Activated T-helper 2 cell treated with anti-CD3 and anti-CD28 coated beads, Interferon-gamma antibody, Interleukin-2, Interleukin-4, amounts not matched to agents 10 μg/mL and 5 μg/mL and 100 μg/mL, durations not matched to agents 14 hours and 24 hours and 36 hours (primary cell): ENCODE measurements at regions of chr2 and their contacts with region 1.

Region 1: DNA sequence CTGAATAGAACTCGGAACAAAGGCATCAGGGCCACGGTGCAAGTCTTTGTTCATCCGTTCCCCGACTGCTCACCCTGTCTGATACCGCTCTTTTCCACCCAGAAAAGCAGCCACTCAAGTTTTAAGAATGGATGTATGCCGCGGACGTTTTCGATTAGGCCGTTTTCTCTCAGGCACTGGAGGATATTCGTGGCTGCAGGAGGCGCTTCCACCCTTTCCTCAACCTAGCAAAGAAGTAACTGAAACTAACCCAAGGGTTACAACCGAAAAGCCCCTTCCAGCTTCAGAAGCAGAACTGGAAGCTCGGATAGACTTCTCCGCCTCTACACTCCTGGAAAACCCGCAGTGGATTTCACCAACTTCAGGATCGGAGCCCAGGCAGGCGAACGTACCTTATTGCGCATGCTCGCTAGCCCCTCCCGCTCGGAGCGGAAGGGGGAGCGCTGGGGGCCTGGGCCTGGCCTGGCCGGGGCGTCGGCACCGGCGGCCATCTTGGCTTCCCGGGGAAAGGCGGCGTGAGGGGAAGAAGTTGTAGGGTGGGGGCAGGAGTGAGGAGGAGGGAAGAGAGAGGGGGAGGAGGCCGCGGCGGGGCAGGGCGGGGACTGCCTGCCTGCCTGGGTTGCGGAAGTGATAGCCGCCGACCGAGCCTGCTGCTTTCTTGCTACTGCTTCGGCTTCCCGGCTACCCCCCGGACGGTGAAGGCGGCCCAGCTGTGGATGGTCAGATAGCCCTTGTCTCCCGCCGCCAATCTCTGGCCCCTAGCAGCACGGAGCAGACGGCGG is at the start of gene ACTR3:
- DNase-seq: peak; percentile 98
- H3K4me3 Mint-ChIP-seq: peak within 1 kb of the TSS; percentile 98
- H3K27ac Mint-ChIP-seq: peak within 1 kb of the TSS; percentile 99
- H3K4me1 Mint-ChIP-seq: peaks cover 67% of the 10 kb centered on the region
- H3K27me3 Mint-ChIP-seq: no peaks in the 10 kb centered on the region
- total RNA-seq, gene ACTR3: 521 and 530 TPM in 2 replicates

Region 2: GRCh38 chr2:113692698-113693428 is 196.8 kb before region 1 on chr2:
- intact Hi-C with region 1: loop called (anchors 1 kb)
- DNase-seq: peak; percentile 38
- H3K4me3 Mint-ChIP-seq: peak overlapping the region; percentile 61
- H3K27ac Mint-ChIP-seq: peak overlapping the region; percentile 94
- H3K4me1 Mint-ChIP-seq: peaks cover 49% of the 10 kb centered on the region
- H3K27me3 Mint-ChIP-seq: no peaks in the 10 kb centered on the region

Region 3: DNA sequence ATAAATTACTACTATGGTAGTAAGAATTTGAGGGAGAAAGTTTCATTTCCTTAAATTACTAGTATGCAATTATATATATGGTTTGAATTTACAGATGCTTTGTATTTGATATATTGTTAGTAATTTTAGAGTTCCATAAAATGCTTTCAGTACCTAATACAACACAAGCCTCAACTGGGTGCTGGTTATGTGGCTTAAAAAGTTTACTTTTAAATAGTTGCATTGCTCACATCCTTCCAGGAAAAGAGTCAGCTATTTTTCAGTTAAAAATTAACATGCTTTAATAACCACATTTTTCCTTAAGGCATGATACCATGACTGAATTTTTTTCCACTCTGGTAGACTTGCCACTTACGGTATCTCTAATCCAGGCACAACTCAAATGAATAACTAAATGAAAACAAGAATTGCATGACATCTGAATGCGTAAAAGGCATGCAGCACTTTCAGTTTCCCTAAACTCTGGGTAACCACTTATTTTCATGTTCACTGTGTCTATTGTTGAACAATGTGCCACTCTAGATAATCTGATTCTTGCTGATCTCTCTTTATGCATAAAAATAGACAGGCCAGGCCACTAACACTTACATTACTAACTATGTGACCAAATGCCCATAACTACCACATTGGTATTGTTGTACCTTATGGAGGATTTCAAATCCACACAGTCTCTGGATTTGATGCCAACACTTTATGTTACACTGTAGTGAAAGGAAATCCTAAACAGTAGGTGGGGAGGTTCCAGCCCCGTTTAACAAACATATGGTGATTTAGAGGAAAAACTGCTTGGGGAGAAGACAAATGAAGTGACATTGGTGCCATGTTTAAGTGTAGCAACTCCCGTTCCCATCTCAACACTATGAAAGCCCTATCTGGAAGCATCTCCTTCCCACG is 97.7 kb before region 1 on chr2:
- intact Hi-C with region 1: loop called (anchors 1 kb)
- DNase-seq: no peak
- H3K4me3 Mint-ChIP-seq: peak overlapping the region; percentile 45
- H3K27ac Mint-ChIP-seq: peak overlapping the region; percentile 98
- H3K4me1 Mint-ChIP-seq: peaks cover 24% of the 10 kb centered on the region
- H3K27me3 Mint-ChIP-seq: no peaks in the 10 kb centered on the region

Region 4: DNA sequence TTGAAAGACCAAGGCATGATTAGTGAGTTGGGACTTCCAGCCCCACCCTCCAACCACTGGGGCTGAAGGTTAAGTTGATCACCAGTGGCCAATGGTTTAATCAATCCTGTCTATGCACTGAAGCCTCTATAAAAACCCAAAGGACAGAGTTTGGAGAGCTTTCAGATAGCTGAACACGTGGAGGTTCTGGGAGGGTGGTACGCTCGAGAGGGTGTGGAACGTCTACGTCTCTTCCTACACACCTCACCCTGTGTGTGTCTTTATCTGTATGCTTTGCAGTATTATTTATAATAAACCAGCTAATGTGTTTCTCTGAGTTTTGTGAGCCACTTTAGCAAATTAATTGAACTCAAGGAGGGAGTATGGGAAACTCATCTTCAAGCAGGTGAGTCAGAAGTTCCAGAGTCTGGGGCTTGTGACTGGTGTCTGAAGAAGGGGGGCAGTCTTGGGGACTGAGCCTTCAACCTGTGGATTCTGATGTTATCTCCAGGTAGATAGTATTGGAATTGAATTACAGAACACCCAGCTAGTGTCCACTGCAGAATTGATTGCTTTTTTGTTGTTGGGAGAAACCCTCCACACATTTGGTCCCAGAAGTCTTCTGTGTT is 20.6 kb after region 1 on chr2:
- intact Hi-C with region 1: loop called (anchors 2 kb)
- DNase-seq: no peak
- H3K4me3 Mint-ChIP-seq: no peak overlapping the region
- H3K27ac Mint-ChIP-seq: peak overlapping the region; percentile 86
- H3K4me1 Mint-ChIP-seq: peaks cover 61% of the 10 kb centered on the region
- H3K27me3 Mint-ChIP-seq: no peaks in the 10 kb centered on the region

Region 5: GRCh38 chr2:113965644-113966043 is 76.0 kb after region 1 on chr2:
- intact Hi-C with region 1: loop called (anchors 5 kb)
- DNase-seq: no peak
- H3K4me3 Mint-ChIP-seq: no peak overlapping the region
- H3K27ac Mint-ChIP-seq: no peak overlapping the region
- H3K4me1 Mint-ChIP-seq: peaks cover 13% of the 10 kb centered on the region
- H3K27me3 Mint-ChIP-seq: no peaks in the 10 kb centered on the region